IMR-90 (cell line): ENCODE measurements at regions of chr14 and their contacts with region 1.

Region 1: DNA sequence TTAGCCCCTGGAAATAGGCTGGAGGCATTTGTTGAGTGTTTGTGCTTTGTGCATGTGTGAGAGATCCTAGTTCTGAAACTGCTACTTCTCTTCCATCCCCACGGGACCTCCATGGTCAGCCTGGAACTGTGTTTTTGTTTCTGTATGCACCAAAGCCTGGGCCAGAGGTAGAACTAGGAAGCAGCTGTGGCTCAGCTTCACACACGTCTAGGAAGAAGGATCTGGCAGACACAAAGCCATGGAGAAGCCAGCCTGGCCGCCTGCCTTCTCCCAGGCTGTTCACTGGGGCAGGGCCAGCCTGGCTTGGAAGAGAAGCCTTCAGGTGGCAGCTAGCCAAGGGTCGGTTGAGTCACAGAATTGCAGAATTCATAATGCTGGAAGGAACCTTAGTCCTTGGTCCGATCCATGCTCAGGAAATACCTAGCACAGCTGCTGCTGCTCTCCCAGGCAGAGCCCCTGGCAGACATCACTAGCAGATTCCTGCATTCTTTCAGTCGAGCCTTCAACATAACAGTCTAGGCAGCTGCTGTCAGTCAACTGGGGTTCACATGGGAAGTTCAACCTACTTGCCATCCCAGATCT is 27.0 kb downstream of the RIN3 start:
- DNase-seq: peak; percentile 100
- ATAC-seq: peak; percentile 87
- H3K4me3 ChIP-seq: no peak overlapping the region
- H3K27ac ChIP-seq: peak overlapping the region; percentile 80
- H3K4me1 ChIP-seq: peaks cover 17% of the 10 kb centered on the region
- H3K27me3 ChIP-seq: no peaks in the 10 kb centered on the region
- CTCF ChIP-seq: no peak
- POLR2A ChIP-seq: no peak
- RAD21 ChIP-seq: peak; percentile 41

Region 2: DNA sequence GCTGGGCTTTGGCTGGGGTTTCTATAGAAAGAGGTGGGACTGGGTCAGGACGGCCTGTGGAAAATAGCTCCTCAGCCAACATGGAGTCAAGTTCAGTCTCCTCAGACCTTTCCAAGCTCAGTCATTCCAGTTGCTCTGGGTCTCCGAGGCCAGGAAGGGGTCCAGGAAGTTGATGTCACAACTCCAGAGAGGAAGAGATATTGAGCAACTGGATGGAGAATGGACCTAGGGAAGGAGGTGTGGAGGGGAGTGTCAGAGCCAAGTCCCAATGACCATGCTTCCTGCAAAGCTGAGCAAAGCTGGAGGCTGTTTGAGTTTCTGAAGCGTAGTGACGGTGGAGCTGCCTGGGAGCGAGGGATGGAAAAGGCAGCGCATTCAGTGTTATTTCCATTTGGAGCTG is 131.5 kb before region 1 on chr14:
- CTCF ChIA-PET with region 1: no interaction called
- POLR2A ChIA-PET with region 1: no interaction called
- dilution Hi-C with region 1: no loop called
- in situ Hi-C with region 1: no loop called
- intact Hi-C with region 1: loop called (anchors 1 kb)
- DNase-seq: no peak
- ATAC-seq: no peak
- H3K4me3 ChIP-seq: no peak overlapping the region
- H3K27ac ChIP-seq: no peak overlapping the region
- H3K4me1 ChIP-seq: peaks cover 19% of the 10 kb centered on the region
- H3K27me3 ChIP-seq: no peaks in the 10 kb centered on the region
- CTCF ChIP-seq: no peak
- POLR2A ChIP-seq: no peak
- RAD21 ChIP-seq: no peak

Region 3: GRCh38 chr14:92578511-92578910 is 37.9 kb after region 1 on chr14:
- CTCF ChIA-PET with region 1: no interaction called
- POLR2A ChIA-PET with region 1: no interaction called
- dilution Hi-C with region 1: no loop called
- in situ Hi-C with region 1: no loop called
- intact Hi-C with region 1: loop called (anchors 2 kb)
- DNase-seq: peak; percentile 72
- ATAC-seq: peak; percentile 44; the same call in 1 of the 2 replicates
- H3K4me3 ChIP-seq: no peak overlapping the region
- H3K27ac ChIP-seq: peak overlapping the region; percentile 7; the same call in 1 of the 2 replicates
- H3K4me1 ChIP-seq: peaks cover 7% of the 10 kb centered on the region
- H3K27me3 ChIP-seq: no peaks in the 10 kb centered on the region
- CTCF ChIP-seq: no peak
- POLR2A ChIP-seq: no peak
- RAD21 ChIP-seq: no peak

Region 4: DNA sequence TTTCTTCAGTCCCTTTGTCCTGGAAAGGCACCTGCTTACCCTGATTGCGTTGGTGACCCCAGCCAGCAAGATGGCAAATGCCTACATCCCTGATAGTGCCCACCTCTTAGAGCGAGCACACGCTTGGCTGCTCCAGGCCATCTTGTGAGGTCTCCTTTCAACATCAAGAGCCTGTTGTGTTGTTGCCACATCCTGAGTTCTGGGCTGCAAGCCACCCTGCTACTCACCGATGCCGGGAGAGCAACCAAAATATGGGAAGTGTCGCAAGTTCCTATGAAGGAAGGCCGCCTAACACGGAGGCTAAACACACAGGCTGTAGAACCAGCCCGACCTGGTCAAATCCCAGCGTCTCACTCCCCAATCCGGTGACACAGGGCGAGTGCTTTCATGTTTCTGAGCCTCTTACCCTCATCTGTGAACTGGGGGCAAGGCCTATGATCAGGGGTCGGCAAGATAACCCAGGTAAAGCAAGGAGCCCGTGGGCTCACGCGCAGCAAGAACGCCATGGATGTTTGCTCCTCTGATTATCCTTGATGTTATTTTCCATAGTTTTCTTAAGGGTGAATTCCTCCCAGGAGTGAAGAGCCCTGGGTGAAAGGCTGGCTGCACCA is 109.5 kb after region 1 on chr14:
- CTCF ChIA-PET with region 1: interaction called, 3 read pairs
- POLR2A ChIA-PET with region 1: no interaction called
- dilution Hi-C with region 1: no loop called
- in situ Hi-C with region 1: no loop called
- intact Hi-C with region 1: loop called (anchors 5 kb)
- DNase-seq: peak; percentile 92
- ATAC-seq: no peak; the same call in 1 of the 2 replicates
- H3K4me3 ChIP-seq: no peak overlapping the region
- H3K27ac ChIP-seq: peak overlapping the region; percentile 100
- H3K4me1 ChIP-seq: peaks cover 39% of the 10 kb centered on the region
- H3K27me3 ChIP-seq: no peaks in the 10 kb centered on the region
- CTCF ChIP-seq: no peak
- POLR2A ChIP-seq: no peak
- RAD21 ChIP-seq: no peak

Region 5: GRCh38 chr14:92686900-92687444 is 146.4 kb after region 1 on chr14:
- CTCF ChIA-PET with region 1: no interaction called
- POLR2A ChIA-PET with region 1: no interaction called
- dilution Hi-C with region 1: no loop called
- in situ Hi-C with region 1: no loop called
- intact Hi-C with region 1: loop called (anchors 1 kb)
- DNase-seq: peak; percentile 43
- ATAC-seq: peak; percentile 99
- H3K4me3 ChIP-seq: no peak overlapping the region
- H3K27ac ChIP-seq: no peak overlapping the region
- H3K4me1 ChIP-seq: 0 out of 2 replicates have a peak, but pooled peaks cover 2% of the 10 kb centered on the region
- H3K27me3 ChIP-seq: no peaks in the 10 kb centered on the region
- CTCF ChIP-seq: peak; percentile 96
- POLR2A ChIP-seq: no peak
- RAD21 ChIP-seq: peak; percentile 85